Esophagus muscularis mucosa (tissue), 4 donors: ENCODE measurements at regions of chr3 and their contacts with region 1.

Region 1: DNA sequence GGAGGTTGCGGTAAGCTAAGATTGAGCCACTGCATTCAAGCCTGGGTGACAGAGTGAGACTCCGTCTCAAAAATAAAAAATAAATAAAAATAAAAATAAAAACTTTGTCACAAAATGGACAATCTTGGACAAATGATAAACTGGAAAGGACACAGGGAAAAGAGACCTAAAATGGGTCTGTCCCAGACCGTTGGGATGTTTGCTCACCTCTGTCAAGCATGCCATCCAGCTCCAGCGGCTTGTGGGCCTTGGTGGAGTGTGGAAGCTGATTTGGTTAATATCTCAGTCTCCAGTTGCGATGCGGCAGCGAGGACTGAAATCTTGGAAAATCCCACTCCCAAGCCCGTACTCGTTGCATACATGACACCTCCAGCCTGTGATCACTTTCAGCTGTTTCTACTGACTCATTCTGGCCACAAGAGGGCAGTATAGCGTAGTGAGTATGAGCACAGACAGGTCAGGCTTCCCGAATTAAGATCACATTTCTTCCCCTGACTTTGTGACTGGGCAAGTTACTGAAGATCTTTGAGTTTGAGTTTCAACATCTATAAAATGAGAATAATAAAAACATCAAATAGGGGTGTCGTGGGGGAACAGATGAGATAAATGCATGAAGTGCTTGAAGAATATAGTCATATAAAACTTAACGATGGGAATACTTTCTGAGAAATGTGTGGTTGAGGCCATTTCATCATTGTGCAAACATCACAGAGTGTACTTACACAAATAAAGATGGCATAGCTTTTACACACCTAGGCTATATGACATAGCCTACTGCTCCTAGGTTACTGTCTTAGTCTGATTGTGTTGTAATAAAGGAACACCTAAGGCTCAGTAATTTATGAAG is 19.6 kb upstream of the MOBP start:
- DNase-seq: no peak
- H3K4me3 ChIP-seq: no peak overlapping the region
- H3K27ac ChIP-seq: no peak overlapping the region
- H3K4me1 ChIP-seq: peaks cover 0 to 4% (median 0%) of the 10 kb centered on the region in 4 donors
- H3K27me3 ChIP-seq: peaks cover 0 to 6% (median 0%) of the 10 kb centered on the region in 4 donors
- CTCF ChIP-seq: peak; percentile 77 to 89 (median 86)
- EP300 ChIP-seq: no peak
- POLR2A ChIP-seq: no peak

Region 2: GRCh38 chr3:39291903-39292329 is 155.9 kb before region 1 on chr3:
- intact Hi-C with region 1: no loop called
- DNase-seq: peak; percentile 95
- H3K4me3 ChIP-seq: no peak overlapping the region
- H3K27ac ChIP-seq: no peak overlapping the region
- H3K4me1 ChIP-seq: peaks cover 0 to 11% (median 4%) of the 10 kb centered on the region in 4 donors
- H3K27me3 ChIP-seq: no peaks in the 10 kb centered on the region
- CTCF ChIP-seq: peak; percentile 86 to 98 (median 90)
- EP300 ChIP-seq: no peak
- POLR2A ChIP-seq: no peak

Region 3: GRCh38 chr3:39499651-39500240 is 51.9 kb after region 1 on chr3:
- intact Hi-C with region 1: loop called (anchors 5 kb)
- DNase-seq: no peak
- H3K4me3 ChIP-seq: no peak overlapping the region
- H3K27ac ChIP-seq: no peak overlapping the region
- H3K4me1 ChIP-seq: peaks cover 0 to 11% (median 5%) of the 10 kb centered on the region in 4 donors
- H3K27me3 ChIP-seq: peaks cover 0 to 49% (median 3%) of the 10 kb centered on the region in 4 donors
- CTCF ChIP-seq: no peak
- EP300 ChIP-seq: no peak
- POLR2A ChIP-seq: no peak

Region 4: GRCh38 chr3:39569095-39569494 is 121.2 kb after region 1 on chr3:
- intact Hi-C with region 1: no loop called
- DNase-seq: no peak
- H3K4me3 ChIP-seq: no peak overlapping the region
- H3K27ac ChIP-seq: no peak overlapping the region
- H3K4me1 ChIP-seq: no peaks in the 10 kb centered on the region
- H3K27me3 ChIP-seq: no peaks in the 10 kb centered on the region
- CTCF ChIP-seq: no peak
- EP300 ChIP-seq: no peak
- POLR2A ChIP-seq: no peak